ENCODE measurements at regions of chr7 and their contacts with region 1.

Region 1: GRCh38 chr7:151368136-151368571 is 26.5 kb downstream of the NUB1 start:
- DNase-seq: peak; percentile 87
- CTCF ChIP-seq: peak; percentile 94

Region 2: GRCh38 chr7:151110941-151111645 is 257.1 kb before region 1 on chr7:
- in situ Hi-C with region 1: no loop called
- DNase-seq: peak; percentile 93
- CTCF ChIP-seq: peak; percentile 95

Region 3: GRCh38 chr7:151759591-151760042 is 391.5 kb after region 1 on chr7:
- in situ Hi-C with region 1: loop called (anchors 25 kb)
- DNase-seq: peak; percentile 82
- CTCF ChIP-seq: peak; percentile 83

Measured in GM13977 (cell line).